ENCODE measurements at regions of chr2 and their contacts with region 1.

Region 1: DNA sequence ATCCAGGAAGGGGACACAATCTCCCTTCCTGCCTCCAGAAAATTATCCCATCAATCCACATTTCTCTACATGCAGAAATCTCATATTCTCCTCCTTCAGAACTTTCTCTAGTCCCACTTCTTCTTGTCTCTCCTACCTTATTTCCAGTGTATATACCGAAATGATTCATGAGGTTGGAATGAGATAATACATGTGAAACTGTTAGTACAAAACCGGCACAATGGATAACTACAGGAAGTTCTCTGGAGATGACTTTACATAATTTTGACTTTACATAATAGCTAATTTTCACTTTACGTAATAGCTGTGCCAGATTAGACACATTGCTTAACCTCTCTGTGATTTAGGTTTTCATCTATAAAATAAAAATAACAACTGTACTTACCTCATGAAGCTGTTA is 801.3 kb downstream of the ERBB4 start:
- DNase-seq: no peak
- ATAC-seq: no peak

Region 2: GRCh38 chr2:211396815-211397214 is 340.5 kb before region 1 on chr2:
- intact Hi-C with region 1: no loop called
- DNase-seq: no peak
- ATAC-seq: no peak

Region 3: GRCh38 chr2:211665299-211665698 is 72.0 kb before region 1 on chr2:
- intact Hi-C with region 1: loop called (anchors 2 kb)
- DNase-seq: no peak
- ATAC-seq: no peak

Region 4: GRCh38 chr2:211854832-211855231 is 117.5 kb after region 1 on chr2:
- intact Hi-C with region 1: no loop called
- DNase-seq: no peak
- ATAC-seq: no peak